CD4-positive, alpha-beta T cell (primary cell): ENCODE measurements at regions of chr17 and their contacts with region 1.

Region 1: GRCh38 chr17:48457080-48457836 is 27.2 kb upstream of the SKAP1 start:
- DNase-seq: peak; percentile 64 to 92 (median 70)
- ATAC-seq: peak; percentile 75
- H3K4me3 ChIP-seq: peak overlapping the region; percentile 37
- H3K4me3 Mint-ChIP-seq: peak overlapping the region; percentile 76
- H3K27ac ChIP-seq: no peak overlapping the region
- H3K27ac Mint-ChIP-seq: no peak overlapping the region
- H3K4me1 ChIP-seq: peaks cover 52% of the 10 kb centered on the region
- H3K4me1 Mint-ChIP-seq: peaks cover 61% of the 10 kb centered on the region
- H3K27me3 ChIP-seq: no peaks in the 10 kb centered on the region
- H3K27me3 Mint-ChIP-seq: no peaks in the 10 kb centered on the region
- CTCF ChIP-seq: peak; percentile 95

Region 2: DNA sequence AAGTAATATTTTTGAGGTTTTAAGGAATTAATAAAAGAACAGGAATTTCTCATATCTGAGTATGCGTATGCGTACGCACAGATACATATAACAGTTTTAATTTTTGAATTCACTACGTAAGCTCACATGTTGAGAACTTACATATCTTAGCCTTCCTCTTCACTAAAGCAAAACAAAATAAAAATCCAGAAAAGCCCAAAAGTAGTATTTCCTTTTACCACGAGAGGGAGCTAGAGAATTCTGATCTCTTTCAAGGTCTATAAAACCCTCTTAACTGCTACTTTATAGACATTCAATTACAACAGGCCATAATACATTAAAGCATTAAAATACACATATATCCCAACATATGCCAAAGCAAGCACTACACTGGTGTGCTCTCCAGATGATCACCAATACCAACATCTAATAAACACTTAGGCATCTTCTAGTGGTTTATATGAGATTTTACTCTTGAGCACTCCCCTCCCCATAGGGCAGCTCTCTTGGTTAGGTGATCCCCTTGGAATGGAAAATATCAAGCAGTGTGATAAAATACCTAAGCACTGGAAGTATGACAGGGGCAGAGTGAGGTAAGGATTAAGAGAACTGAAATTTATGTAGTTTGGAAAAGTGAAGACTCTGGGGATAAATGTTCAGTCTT is 121.3 kb before region 1 on chr17:
- CTCF ChIA-PET with region 1: interaction called, 6 read pairs
- POLR2A ChIA-PET with region 1: no interaction called
- intact Hi-C with region 1: loop called (anchors 1 kb)
- DNase-seq: peak in 3 of 14 experiments; percentile 74 to 79 (median 76)
- ATAC-seq: peak; percentile 66
- H3K4me3 ChIP-seq: no peak overlapping the region
- H3K4me3 Mint-ChIP-seq: no peak overlapping the region
- H3K27ac ChIP-seq: no peak overlapping the region
- H3K27ac Mint-ChIP-seq: no peak overlapping the region
- H3K4me1 ChIP-seq: no peaks in the 10 kb centered on the region
- H3K4me1 Mint-ChIP-seq: peaks cover 6% of the 10 kb centered on the region
- H3K27me3 ChIP-seq: no peaks in the 10 kb centered on the region
- H3K27me3 Mint-ChIP-seq: no peaks in the 10 kb centered on the region
- CTCF ChIP-seq: peak; percentile 85

Region 3: GRCh38 chr17:48378238-48378637 is 79.0 kb before region 1 on chr17:
- CTCF ChIA-PET with region 1: interaction called, 10 read pairs
- POLR2A ChIA-PET with region 1: interaction called, 3 read pairs
- intact Hi-C with region 1: no loop called
- DNase-seq: no peak
- ATAC-seq: no peak
- H3K4me3 ChIP-seq: no peak overlapping the region
- H3K4me3 Mint-ChIP-seq: no peak overlapping the region
- H3K27ac ChIP-seq: no peak overlapping the region
- H3K27ac Mint-ChIP-seq: no peak overlapping the region
- H3K4me1 ChIP-seq: peaks cover 22% of the 10 kb centered on the region
- H3K4me1 Mint-ChIP-seq: peaks cover 41% of the 10 kb centered on the region
- H3K27me3 ChIP-seq: no peaks in the 10 kb centered on the region
- H3K27me3 Mint-ChIP-seq: no peaks in the 10 kb centered on the region
- CTCF ChIP-seq: no peak

Region 4: DNA sequence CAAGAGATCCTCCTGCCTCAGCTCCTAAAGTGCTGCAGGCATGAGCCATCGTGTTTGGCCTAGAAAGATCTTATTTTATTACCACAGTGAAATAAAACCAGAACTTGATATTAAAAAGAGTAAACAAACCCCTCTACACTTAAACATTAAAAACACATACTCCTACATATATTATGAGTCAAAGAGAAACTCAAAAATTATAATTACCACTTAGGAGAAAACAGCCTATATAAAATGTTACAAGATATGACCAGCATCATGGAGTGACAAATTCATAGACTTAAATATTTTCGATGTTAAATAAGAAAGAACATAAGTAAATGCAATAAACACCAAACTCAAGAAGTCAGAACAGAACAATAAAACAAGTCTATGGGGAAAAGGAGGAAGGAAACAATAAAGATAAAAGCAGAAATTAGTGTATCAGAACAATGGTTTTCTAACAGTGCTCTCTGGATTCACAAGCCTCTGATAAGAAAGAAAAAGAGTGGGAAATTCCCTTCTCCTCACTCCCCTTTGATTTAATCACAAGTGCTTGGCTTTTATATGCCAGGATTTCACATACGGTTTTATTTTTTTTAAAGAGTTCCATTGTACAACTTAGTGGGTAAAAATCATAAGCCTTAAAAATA is 50.2 kb before region 1 on chr17:
- CTCF ChIA-PET with region 1: interaction called, 13 read pairs
- POLR2A ChIA-PET with region 1: interaction called, 17 read pairs
- intact Hi-C with region 1: loop called (anchors 2 to 5 kb)
- DNase-seq: peak in 2 of 14 experiments; percentile 44 to 51
- ATAC-seq: no peak
- H3K4me3 ChIP-seq: no peak overlapping the region
- H3K4me3 Mint-ChIP-seq: peak overlapping the region; percentile 22
- H3K27ac ChIP-seq: no peak overlapping the region
- H3K27ac Mint-ChIP-seq: peak overlapping the region; percentile 28
- H3K4me1 ChIP-seq: peaks cover 31% of the 10 kb centered on the region
- H3K4me1 Mint-ChIP-seq: peaks cover 68% of the 10 kb centered on the region
- H3K27me3 ChIP-seq: no peaks in the 10 kb centered on the region
- H3K27me3 Mint-ChIP-seq: no peaks in the 10 kb centered on the region
- CTCF ChIP-seq: no peak

Region 5: GRCh38 chr17:48429638-48430586 is 27.3 kb before region 1 on chr17 and contains the start of gene SKAP1:
- CTCF ChIA-PET with region 1: interaction called, 7 read pairs
- POLR2A ChIA-PET with region 1: interaction called, 54 read pairs
- intact Hi-C with region 1: loop called (anchors 1 to 2 kb)
- DNase-seq: peak in 13 of 14 experiments; percentile 41 to 86 (median 62)
- ATAC-seq: peak; percentile 65
- H3K4me3 ChIP-seq: peak within 1 kb of the TSS; percentile 90
- H3K4me3 Mint-ChIP-seq: peak within 1 kb of the TSS; percentile 92
- H3K27ac ChIP-seq: peak within 1 kb of the TSS; percentile 88 to 95
- H3K27ac Mint-ChIP-seq: peak within 1 kb of the TSS; percentile 93
- H3K4me1 ChIP-seq: peaks cover 43% of the 10 kb centered on the region
- H3K4me1 Mint-ChIP-seq: peaks cover 95% of the 10 kb centered on the region
- H3K27me3 ChIP-seq: no peaks in the 10 kb centered on the region
- H3K27me3 Mint-ChIP-seq: no peaks in the 10 kb centered on the region
- CTCF ChIP-seq: no peak
- total RNA-seq, gene SKAP1: 92.0 to 95.1 TPM

Region 6: GRCh38 chr17:48505787-48506645 is 48.8 kb after region 1 on chr17:
- CTCF ChIA-PET with region 1: no interaction called
- POLR2A ChIA-PET with region 1: no interaction called
- intact Hi-C with region 1: no loop called
- DNase-seq: peak in 11 of 14 experiments; percentile 15 to 83 (median 39)
- ATAC-seq: peak; percentile 94
- H3K4me3 ChIP-seq: no peak overlapping the region
- H3K4me3 Mint-ChIP-seq: no peak overlapping the region
- H3K27ac ChIP-seq: no peak overlapping the region
- H3K27ac Mint-ChIP-seq: peak overlapping the region; percentile 22
- H3K4me1 ChIP-seq: no peaks in the 10 kb centered on the region
- H3K4me1 Mint-ChIP-seq: peaks cover 4% of the 10 kb centered on the region
- H3K27me3 ChIP-seq: no peaks in the 10 kb centered on the region
- H3K27me3 Mint-ChIP-seq: peaks cover 39% of the 10 kb centered on the region
- CTCF ChIP-seq: no peak